PC-9 (cell line): ENCODE measurements at regions of chr3 and their contacts with region 1.

Region 1: GRCh38 chr3:176939022-176939817 is 258.1 kb downstream of the TBL1XR1 start:
- DNase-seq: peak; percentile 47 to 76
- H3K4me3 ChIP-seq: no peak overlapping the region
- H3K27ac ChIP-seq: no peak overlapping the region
- H3K4me1 ChIP-seq: no peaks in the 10 kb centered on the region; the same call in 1 of the 2 replicates
- H3K27me3 ChIP-seq: no peaks in the 10 kb centered on the region
- CTCF ChIP-seq: peak; percentile 98

Region 2: GRCh38 chr3:175957002-175957401 is 982.2 kb before region 1 on chr3:
- CTCF ChIA-PET with region 1: no interaction called
- POLR2A ChIA-PET with region 1: no interaction called
- intact Hi-C with region 1: loop called (anchors 5 kb)
- DNase-seq: peak in 1 of 2 experiments; percentile 43
- H3K4me3 ChIP-seq: no peak overlapping the region
- H3K27ac ChIP-seq: no peak overlapping the region
- H3K4me1 ChIP-seq: no peaks in the 10 kb centered on the region
- H3K27me3 ChIP-seq: no peaks in the 10 kb centered on the region
- CTCF ChIP-seq: peak; percentile 63

Region 3: DNA sequence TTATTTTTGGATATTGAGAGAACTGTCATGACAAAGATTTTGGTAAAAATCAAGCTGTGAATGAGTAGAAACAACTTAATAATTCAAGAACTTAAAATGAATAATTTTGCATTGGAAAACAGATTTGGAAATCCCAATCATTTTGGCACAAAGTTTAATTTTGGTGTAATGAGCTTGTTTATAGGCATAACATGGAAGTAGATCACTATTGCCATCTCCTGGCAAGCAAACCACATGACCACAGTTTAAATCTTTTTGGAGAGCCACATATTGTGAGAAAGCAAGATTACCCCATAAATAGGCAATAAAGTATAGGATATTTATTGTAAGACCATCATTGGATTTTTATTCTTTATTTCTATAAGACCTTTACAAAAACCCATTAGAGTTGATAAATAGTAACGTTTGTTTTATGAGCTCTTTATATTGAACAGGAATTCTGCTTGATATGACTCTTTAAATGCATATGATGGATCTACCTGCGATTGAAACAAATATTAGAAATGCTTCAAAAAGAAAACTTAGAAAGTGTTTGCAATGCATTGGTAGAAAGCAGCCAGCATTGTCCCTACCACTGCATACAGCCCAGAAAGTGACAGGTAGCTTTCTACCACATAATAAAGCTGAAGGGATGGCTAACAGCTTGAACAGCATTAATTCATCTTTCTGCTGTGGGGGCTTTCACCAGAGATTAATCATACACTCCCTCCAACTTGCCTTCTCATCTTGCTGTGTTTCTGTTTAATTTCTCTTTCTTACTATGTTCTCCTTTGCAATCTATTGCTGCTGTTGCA is 508.8 kb before region 1 on chr3:
- CTCF ChIA-PET with region 1: no interaction called
- POLR2A ChIA-PET with region 1: no interaction called
- intact Hi-C with region 1: loop called (anchors 5 kb)
- DNase-seq: peak; percentile 10 to 49
- H3K4me3 ChIP-seq: no peak overlapping the region
- H3K27ac ChIP-seq: no peak overlapping the region
- H3K4me1 ChIP-seq: no peaks in the 10 kb centered on the region
- H3K27me3 ChIP-seq: no peaks in the 10 kb centered on the region
- CTCF ChIP-seq: peak; percentile 89

Region 4: GRCh38 chr3:176514297-176514696 is 424.9 kb before region 1 on chr3:
- CTCF ChIA-PET with region 1: no interaction called
- POLR2A ChIA-PET with region 1: no interaction called
- intact Hi-C with region 1: loop called (anchors 1 kb)
- DNase-seq: peak; percentile 25 to 43
- H3K4me3 ChIP-seq: no peak overlapping the region
- H3K27ac ChIP-seq: no peak overlapping the region
- H3K4me1 ChIP-seq: no peaks in the 10 kb centered on the region
- H3K27me3 ChIP-seq: no peaks in the 10 kb centered on the region
- CTCF ChIP-seq: peak; percentile 93

Region 5: GRCh38 chr3:176663837-176664831 is 275.1 kb before region 1 on chr3:
- CTCF ChIA-PET with region 1: interaction called, 3 read pairs
- POLR2A ChIA-PET with region 1: no interaction called
- intact Hi-C with region 1: loop called (anchors 1 kb)
- DNase-seq: peak; percentile 10 to 65
- H3K4me3 ChIP-seq: no peak overlapping the region
- H3K27ac ChIP-seq: no peak overlapping the region
- H3K4me1 ChIP-seq: 0 out of 2 replicates have a peak, but pooled peaks cover 4% of the 10 kb centered on the region
- H3K27me3 ChIP-seq: no peaks in the 10 kb centered on the region
- CTCF ChIP-seq: peak; percentile 69

Region 6: GRCh38 chr3:176767385-176767784 is 171.8 kb before region 1 on chr3:
- CTCF ChIA-PET with region 1: no interaction called
- POLR2A ChIA-PET with region 1: no interaction called
- intact Hi-C with region 1: loop called (anchors 1 kb)
- DNase-seq: peak; percentile 87
- H3K4me3 ChIP-seq: no peak overlapping the region
- H3K27ac ChIP-seq: peak overlapping the region; percentile 58
- H3K4me1 ChIP-seq: peaks cover 21% of the 10 kb centered on the region
- H3K27me3 ChIP-seq: no peaks in the 10 kb centered on the region
- CTCF ChIP-seq: no peak

Region 7: GRCh38 chr3:176872771-176873209 is 66.4 kb before region 1 on chr3:
- CTCF ChIA-PET with region 1: interaction called, 5 read pairs
- POLR2A ChIA-PET with region 1: no interaction called
- intact Hi-C with region 1: loop called (anchors 1 kb)
- DNase-seq: peak; percentile 34 to 58
- H3K4me3 ChIP-seq: no peak overlapping the region
- H3K27ac ChIP-seq: no peak overlapping the region
- H3K4me1 ChIP-seq: no peaks in the 10 kb centered on the region
- H3K27me3 ChIP-seq: no peaks in the 10 kb centered on the region
- CTCF ChIP-seq: peak; percentile 89